ENCODE measurements at regions of chr19 and their contacts with region 1.

Region 1: DNA sequence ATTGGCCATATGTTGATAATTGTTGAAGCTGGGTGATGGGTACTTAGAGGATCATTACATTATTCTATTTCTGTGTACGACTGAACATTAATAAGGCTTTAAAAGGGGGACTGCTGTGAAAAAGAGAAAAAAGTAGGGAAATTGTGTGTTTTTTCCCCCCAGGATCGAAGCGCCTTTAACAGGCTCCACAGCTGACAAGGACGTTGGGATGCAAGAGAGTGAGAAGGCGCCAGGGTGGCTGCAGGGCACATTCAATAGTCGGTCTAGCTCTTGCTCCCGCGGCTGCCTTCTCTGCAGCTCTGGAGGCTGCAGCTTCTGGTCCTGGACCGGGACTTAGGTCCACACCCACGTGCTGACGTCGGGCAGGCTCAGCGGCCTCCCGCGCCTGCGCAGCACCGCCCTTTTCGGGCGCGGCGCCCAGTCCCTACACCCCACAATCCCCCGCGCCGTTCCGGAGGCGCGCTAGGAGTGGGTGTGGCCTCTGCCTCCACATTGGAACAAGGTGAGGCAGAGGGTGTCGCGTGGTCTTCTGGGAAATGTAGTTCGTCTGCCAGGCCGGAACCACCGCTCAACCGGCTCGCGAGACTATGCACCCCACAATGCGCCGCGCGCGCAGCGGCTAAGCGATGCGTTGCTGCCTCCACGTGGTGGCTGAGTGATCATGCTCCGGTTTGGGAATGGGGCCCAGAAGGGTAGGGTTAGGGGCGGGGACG is 4.9 kb upstream of the LRFN3 start:
- DNase-seq: peak; percentile 100
- ATAC-seq: peak; percentile 99
- H3K4me3 ChIP-seq: peak overlapping the region in 1 of 2 donors; percentile 21
- H3K27ac ChIP-seq: peak overlapping the region; percentile 60 to 89
- H3K4me1 ChIP-seq: peaks cover 14 to 41% of the 10 kb centered on the region in 2 donors
- H3K27me3 ChIP-seq: peaks cover 0 to 19% of the 10 kb centered on the region in 2 donors
- CTCF ChIP-seq: peak; percentile 79 to 88

Region 2: GRCh38 chr19:35879770-35880317 is 51.5 kb before region 1 on chr19:
- intact Hi-C with region 1: loop called in 1 of 2 experiments (anchors 5 kb)
- DNase-seq: peak; percentile 70 to 96 (median 90)
- ATAC-seq: peak; percentile 99
- H3K4me3 ChIP-seq: no peak overlapping the region
- H3K27ac ChIP-seq: no peak overlapping the region
- H3K4me1 ChIP-seq: peaks cover 0 to 5% of the 10 kb centered on the region in 2 donors
- H3K27me3 ChIP-seq: peaks cover 0 to 26% of the 10 kb centered on the region in 2 donors
- CTCF ChIP-seq: no peak

Region 3: GRCh38 chr19:35975608-35976214 is 44.4 kb after region 1 on chr19:
- intact Hi-C with region 1: no loop called
- DNase-seq: no peak
- ATAC-seq: peak; percentile 52
- H3K4me3 ChIP-seq: no peak overlapping the region
- H3K27ac ChIP-seq: no peak overlapping the region
- H3K4me1 ChIP-seq: no peaks in the 10 kb centered on the region
- H3K27me3 ChIP-seq: peaks cover 0 to 59% of the 10 kb centered on the region in 2 donors
- CTCF ChIP-seq: no peak

Region 4: DNA sequence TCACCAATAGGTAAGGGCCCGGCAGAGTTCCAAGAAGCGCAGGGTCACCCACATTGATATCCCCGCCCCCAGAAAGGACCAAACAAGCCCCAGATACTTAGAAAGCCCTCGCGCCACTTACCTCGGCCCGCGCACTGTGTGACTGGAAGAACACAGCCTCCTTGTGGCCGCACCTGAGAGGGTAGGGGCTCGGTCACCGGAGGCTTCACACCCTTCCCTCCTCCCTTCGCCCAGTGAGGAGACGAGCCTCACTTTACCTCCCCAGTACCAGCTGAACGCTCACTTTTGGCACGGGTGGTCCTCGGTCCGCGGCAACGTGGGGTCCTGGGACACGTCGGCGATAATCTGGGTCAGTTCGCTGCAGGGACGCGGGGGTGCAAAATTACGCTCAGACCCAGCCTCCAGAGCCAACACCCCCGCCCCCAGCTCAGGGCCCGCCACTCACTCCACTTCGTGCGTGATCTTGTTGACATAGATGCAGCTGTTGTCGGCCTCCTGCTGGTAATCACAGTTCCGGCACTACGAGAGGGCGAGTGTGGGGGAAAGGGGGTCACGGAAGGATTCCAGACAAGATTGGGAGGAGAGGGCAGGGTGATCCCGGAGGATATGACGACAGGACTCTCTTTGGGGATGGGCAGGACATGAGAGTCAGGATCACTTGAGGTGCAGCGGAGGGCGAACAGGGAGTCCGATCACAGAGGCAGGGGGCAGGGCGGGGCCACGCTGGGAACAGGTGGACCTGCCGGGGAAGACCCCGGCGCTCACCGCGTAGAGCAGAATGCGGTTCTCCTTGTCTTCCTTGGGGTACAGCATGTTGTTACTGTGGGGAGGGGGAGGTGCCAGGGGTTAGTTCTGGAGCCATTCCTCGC is 182.8 kb after region 1 on chr19:
- intact Hi-C with region 1: no loop called
- DNase-seq: peak in 3 of 4 donors; percentile 31 to 83 (median 46)
- ATAC-seq: peak; percentile 2
- H3K4me3 ChIP-seq: peak overlapping the region; percentile 77 to 78
- H3K27ac ChIP-seq: peak overlapping the region; percentile 76 to 94
- H3K4me1 ChIP-seq: peaks cover 12 to 35% of the 10 kb centered on the region in 2 donors
- H3K27me3 ChIP-seq: no peaks in the 10 kb centered on the region
- CTCF ChIP-seq: no peak

Measured in left lung (tissue), 14 donors.